Heart right ventricle (tissue), 16 donors: ENCODE measurements at regions of chr3 and their contacts with region 1.

Region 1: DNA sequence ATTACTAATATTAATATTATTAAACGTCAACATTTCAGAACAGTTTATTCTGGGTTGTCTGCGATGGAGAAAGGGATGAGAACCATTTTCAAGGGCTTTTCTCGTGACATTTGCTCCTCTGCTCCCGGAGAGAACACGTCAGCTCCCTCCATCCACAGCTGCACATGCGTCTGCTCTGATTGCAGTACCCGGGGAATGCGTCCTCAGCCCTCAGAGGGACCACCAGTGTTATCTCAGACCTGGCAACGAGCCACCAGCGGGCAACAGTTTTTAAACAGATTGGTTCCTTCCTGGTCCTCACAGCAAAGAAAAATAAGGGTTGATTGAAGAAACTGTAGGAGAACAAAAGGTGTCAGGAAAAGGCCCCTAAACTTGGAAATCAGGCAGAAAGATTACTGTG is 202.2 kb upstream of the ADAMTS9 start:
- DNase-seq: peak; percentile 62 to 83
- ATAC-seq: peak; percentile 59 to 94 (median 85)
- H3K4me3 ChIP-seq: no peak overlapping the region
- H3K27ac ChIP-seq: peak overlapping the region; percentile 26 to 77 (median 59)
- H3K4me1 ChIP-seq: peaks cover 0 to 57% (median 33%) of the 10 kb centered on the region in 9 donors
- H3K27me3 ChIP-seq: no peaks in the 10 kb centered on the region
- CTCF ChIP-seq: no peak

Region 2: DNA sequence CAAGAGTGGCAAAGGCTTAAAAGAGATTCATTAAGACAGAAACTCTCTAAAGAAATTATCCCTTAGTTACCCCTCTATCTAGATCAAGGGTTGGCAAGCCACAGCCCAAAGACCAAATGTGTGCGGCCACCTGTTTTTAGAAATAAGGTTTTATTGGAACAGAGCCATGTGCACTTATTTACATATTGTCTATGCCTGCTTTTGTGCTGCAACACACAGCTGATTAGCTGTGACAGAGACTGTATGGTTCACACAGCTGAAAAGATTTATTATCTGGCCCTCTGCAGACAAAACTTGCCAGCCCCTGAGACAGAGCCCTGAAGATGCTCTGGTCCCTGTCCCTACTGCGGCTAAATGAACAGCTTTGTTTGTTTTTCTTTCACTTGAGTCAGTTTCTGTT is 290.4 kb before region 1 on chr3:
- intact Hi-C with region 1: no loop called
- DNase-seq: no peak
- ATAC-seq: no peak
- H3K4me3 ChIP-seq: no peak overlapping the region
- H3K27ac ChIP-seq: no peak overlapping the region
- H3K4me1 ChIP-seq: peaks cover 0 to 25% (median 13%) of the 10 kb centered on the region in 9 donors
- H3K27me3 ChIP-seq: no peaks in the 10 kb centered on the region
- CTCF ChIP-seq: no peak

Region 3: DNA sequence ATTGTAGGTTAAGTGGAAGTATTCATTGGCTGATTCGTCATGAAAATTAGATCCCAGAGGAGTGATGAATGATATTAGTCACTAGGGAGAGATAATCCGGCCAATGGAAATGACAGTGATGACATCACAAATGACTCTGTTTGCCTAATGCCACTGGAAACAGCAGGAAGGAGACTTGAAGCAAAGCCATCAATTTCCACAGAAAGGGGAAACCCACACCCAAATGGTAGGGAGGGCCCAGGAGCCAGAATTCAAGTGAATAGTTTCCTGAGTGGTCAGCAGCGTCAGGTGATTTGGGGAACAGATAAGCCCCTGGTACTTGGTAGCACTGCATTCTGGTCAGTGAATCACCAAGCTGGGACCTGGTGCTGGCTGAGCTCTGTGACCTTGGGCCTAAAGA is 199.0 kb before region 1 on chr3:
- intact Hi-C with region 1: loop called in 2 of 10 experiments (anchors 5 to 10 kb)
- DNase-seq: peak in 1 of 2 donors; percentile 40
- ATAC-seq: peak in 5 of 8 donors; percentile 4 to 60 (median 20)
- H3K4me3 ChIP-seq: no peak overlapping the region
- H3K27ac ChIP-seq: peak overlapping the region in 9 of 10 donors; percentile 10 to 60 (median 46)
- H3K4me1 ChIP-seq: peaks cover 0 to 52% (median 36%) of the 10 kb centered on the region in 9 donors
- H3K27me3 ChIP-seq: peaks cover 0 to 24% (median 0%) of the 10 kb centered on the region in 7 donors
- CTCF ChIP-seq: no peak

Region 4: DNA sequence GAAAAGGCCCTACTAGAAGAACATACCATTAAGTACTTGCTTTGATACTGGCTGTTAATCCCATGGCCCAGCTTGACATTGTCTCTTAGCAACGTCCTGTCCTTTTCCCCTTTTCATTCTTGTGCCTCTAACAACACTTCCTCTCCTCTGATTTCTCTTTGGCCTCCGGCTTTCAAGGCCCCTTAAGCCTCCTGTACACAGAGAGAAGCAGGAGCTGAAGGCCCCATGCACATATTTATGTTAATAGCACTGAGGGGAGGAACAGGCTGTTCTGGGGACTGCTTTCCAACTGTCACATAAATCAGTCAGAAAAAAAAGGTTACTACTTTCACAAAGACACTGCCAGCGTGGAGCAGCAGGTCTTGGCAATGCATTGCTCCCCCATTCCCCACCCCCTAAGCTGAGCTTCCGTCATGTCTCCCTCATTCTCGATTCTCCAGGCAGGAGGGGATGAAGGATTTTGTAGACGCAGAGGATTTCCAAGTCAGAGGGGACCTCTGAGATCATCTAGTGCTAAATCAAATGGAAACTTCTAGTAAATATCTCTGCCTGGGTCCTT is 55.2 kb after region 1 on chr3:
- intact Hi-C with region 1: loop called in 1 of 10 experiments (anchors 5 kb)
- DNase-seq: peak in 1 of 2 donors; percentile 17
- ATAC-seq: peak; percentile 56 to 87 (median 71)
- H3K4me3 ChIP-seq: no peak overlapping the region
- H3K27ac ChIP-seq: peak overlapping the region; percentile 14 to 75 (median 58)
- H3K4me1 ChIP-seq: peaks cover 0 to 32% (median 11%) of the 10 kb centered on the region in 9 donors
- H3K27me3 ChIP-seq: no peaks in the 10 kb centered on the region
- CTCF ChIP-seq: no peak